Lower leg skin (tissue), 4 donors: ENCODE measurements at regions of chr9 and their contacts with region 1.

Region 1: GRCh38 chr9:107576962-107577776 is 87.6 kb upstream of the KLF4 start:
- DNase-seq: no peak
- H3K4me3 ChIP-seq: no peak overlapping the region
- CTCF ChIP-seq: no peak
- POLR2A ChIP-seq: no peak

Region 2: DNA sequence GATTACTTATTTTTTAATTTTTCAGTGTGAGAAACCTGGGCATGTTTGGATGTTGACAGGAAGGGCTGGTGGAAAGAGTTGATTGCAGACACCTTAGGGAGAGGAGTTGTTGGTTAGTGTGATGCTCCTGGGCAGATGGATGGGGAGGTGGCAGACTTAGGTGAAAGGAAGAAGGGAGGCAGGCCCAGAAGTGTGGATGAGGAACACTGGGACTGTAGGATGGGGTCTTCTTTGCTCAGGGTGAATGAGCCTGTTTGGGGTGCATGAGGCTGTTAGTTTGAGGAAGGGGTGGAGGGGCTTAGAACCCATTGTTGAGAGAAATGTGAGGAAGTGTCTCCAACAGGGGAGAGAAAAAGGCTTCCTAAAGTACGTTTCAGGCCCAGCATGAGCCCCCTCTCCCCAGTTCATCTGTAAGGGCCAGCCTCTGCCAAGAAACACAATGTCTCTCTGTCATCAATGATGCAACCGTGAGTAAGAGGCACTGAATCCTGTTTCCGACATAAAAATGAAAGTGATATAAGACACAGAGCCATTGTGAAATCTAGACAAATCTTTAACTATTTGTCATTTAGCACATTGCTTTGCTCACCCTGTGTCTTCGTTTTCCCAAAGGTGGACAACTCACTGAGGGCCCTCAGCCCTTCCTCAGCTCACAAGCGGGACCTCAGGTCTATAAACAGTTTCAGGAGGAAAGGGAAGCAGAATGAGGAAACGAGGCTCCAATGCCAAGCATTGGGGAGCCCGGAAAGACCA is 28.9 kb before region 1 on chr9:
- intact Hi-C with region 1: loop called (anchors 1 kb)
- DNase-seq: peak in 1 of 2 donors; percentile 62
- H3K4me3 ChIP-seq: no peak overlapping the region
- CTCF ChIP-seq: no peak
- POLR2A ChIP-seq: no peak